Mammary epithelial cell (primary cell): ENCODE measurements at regions of chr14 and their contacts with region 1.

Region 1: DNA sequence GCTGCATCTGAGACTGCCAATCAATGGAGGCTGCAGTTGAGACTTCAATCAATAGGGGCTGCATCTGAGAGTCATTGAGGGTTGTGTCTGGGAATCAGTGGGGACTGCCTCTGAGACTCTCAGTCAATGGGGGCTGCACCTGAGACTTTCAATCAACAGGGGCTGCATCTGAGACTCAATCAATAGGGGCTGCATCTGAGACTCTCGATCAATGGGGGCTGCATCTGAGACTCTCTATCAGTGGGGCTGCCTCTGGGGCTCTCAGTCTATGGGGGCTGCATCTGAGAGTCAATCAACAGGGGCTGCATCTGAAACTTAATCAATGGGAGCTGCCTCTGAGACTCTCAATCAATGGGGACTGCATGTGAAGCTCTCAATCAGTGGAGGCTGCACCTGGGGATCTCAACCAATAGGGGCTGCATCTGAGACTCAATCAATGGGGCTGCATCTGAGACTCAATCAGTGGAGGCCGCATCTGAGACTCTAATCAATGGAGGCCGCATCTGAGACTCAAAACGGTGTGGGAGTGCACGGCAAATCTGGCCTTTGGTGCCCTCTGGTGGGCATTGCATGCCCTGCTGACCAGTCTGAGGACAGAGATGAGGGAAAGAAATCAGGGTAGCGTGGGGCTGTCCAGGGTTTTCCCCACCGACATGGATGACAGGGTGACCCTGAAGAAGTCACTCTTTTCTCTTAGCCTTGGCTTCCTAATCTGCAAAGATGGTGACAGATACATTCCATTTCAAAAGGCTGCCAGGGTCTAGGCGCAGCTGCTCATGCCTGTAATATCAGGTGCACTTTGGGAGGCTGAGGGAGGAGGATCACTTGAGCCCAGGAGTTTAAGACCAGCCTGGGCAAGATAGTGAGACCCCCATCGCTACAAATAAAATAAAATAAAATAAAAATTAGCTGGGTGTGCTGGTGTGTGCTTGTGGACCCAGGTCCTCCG is 41.3 kb upstream of the EIF5 start:
- DNase-seq: peak; percentile 41
- H3K4me3 ChIP-seq: no peak overlapping the region
- H3K27ac ChIP-seq: no peak overlapping the region
- H3K4me1 ChIP-seq: peaks cover 6% of the 10 kb centered on the region
- H3K27me3 ChIP-seq: no peaks in the 10 kb centered on the region
- CTCF ChIP-seq: peak; percentile 91 to 97

Region 2: DNA sequence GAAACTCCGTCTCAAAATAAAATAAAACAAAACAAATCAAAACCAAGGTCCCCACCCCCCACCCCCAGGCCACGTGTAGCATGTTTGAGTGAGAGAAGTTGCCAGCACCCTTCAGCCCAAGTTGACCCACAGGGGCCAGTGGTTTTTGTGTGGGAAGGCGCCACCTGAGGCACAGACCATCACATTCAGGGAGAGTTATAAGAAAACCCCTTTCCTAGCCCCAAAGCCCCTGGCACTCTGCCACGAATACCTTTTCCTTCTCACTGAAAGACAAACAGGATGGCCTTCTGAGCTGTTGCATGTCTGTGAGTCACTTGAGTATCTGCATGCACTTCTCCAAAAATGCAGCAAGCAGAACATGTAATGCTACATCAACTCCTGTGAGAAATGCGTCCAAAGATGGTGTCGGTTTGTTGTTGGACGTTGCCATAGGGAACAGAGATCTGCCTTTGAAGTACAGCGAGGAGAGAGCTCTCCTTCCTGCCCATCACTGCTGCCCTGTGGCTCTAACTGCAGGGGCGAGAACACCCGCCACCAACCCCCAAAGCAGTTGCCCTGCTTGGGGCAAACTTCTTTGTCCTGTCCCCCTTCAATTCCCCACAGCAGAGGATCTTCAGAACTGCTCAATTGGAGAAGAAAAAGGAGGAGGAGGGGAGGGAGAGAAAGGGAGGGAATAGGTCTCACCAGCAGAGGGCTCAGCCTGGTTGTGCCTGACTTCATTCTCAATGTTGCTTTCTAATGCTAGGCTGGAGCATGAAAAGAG is 518.1 kb before region 1 on chr14:
- CTCF ChIA-PET with region 1: no interaction called
- dilution Hi-C with region 1: no loop called
- in situ Hi-C with region 1: no loop called
- intact Hi-C with region 1: loop called (anchors 5 kb)
- DNase-seq: peak; percentile 63
- H3K4me3 ChIP-seq: no peak overlapping the region
- H3K27ac ChIP-seq: no peak overlapping the region
- H3K4me1 ChIP-seq: peaks cover 24% of the 10 kb centered on the region
- H3K27me3 ChIP-seq: no peaks in the 10 kb centered on the region
- CTCF ChIP-seq: peak; percentile 74 to 83

Region 3: DNA sequence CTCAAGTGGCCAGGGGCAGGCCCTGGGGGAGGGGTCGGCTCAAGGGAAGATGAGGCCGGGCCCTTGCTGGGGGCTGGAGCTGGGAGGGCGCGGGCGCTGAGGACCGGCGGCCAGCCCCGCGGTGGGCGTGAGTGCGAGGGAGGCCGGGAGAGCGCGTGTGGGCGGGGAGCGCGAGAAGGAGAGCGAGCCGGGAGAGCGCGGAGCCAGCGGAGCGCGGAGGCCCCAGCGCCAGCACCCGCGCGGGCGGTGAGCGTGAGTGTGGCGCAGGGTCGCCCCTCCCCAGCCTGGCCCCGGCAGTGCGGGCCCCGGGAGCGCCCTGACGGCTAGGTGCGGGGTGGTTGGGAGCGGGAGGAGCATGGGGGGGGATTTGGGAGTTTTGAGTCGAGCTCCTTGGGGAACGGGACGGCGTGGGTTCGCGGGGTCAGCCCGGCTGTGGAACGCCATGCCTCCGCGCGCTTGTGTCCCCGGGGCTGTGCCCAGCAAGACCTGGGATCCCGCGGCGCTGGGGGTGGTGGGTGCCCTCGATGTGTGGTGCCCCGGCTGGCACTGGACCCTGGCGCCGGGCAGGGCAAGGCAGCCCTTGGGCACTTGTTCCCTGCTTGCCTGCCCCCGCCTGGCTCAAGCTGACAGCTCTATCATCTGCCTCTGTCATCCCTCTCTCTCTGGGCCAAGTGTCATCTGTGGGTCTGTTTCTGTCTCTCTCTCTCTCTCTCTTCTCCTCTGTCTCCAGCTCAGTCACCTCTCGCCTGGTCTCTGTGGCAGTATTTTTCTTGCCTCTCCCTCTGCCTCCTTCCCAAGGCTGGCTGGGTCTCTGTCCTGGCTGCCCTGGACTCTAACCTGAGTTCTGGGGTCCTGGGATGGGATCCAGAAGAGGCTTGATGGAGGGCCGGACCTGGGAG is 208.4 kb before region 1 on chr14 and contains the start of gene LBHD2:
- CTCF ChIA-PET with region 1: no interaction called
- dilution Hi-C with region 1: no loop called
- in situ Hi-C with region 1: loop called (anchors 5 to 10 kb)
- intact Hi-C with region 1: no loop called
- DNase-seq: no peak
- H3K4me3 ChIP-seq: no peak within 1 kb of the TSS
- H3K27ac ChIP-seq: no peak within 1 kb of the TSS
- H3K4me1 ChIP-seq: no peaks in the 10 kb centered on the region
- H3K27me3 ChIP-seq: peaks cover 7% of the 10 kb centered on the region
- CTCF ChIP-seq: no peak
- total RNA-seq, gene LBHD2: not detected

Region 4: GRCh38 chr14:103185051-103185992 is 107.4 kb before region 1 on chr14:
- CTCF ChIA-PET with region 1: no interaction called
- dilution Hi-C with region 1: no loop called
- in situ Hi-C with region 1: no loop called
- intact Hi-C with region 1: loop called (anchors 1 kb)
- DNase-seq: peak; percentile 82
- H3K4me3 ChIP-seq: no peak overlapping the region
- H3K27ac ChIP-seq: peak overlapping the region; percentile 36
- H3K4me1 ChIP-seq: peaks cover 11% of the 10 kb centered on the region
- H3K27me3 ChIP-seq: peaks cover 3% of the 10 kb centered on the region
- CTCF ChIP-seq: peak; percentile 54 to 63

Region 5: DNA sequence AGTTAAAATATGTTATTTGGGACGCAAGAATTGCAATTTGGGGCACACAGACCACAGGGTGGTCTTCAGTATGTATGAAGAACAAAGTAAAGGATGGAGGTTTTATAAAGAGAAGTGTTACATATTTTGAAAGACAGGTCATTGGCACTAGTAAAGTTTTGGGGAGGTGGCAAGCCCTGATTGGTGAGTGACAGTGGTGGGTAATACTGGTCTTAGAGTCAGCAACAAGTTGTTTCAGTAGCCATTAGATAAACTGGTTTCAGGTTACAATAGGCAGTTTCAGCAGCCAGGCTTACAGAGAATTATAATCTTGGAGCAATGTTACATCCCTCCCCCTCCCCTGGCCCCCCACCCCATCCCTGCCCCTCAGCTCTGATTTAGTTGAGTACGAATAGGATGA is 110.0 kb after region 1 on chr14:
- CTCF ChIA-PET with region 1: no interaction called
- dilution Hi-C with region 1: no loop called
- in situ Hi-C with region 1: no loop called
- intact Hi-C with region 1: no loop called
- DNase-seq: no peak
- H3K4me3 ChIP-seq: no peak overlapping the region
- H3K27ac ChIP-seq: no peak overlapping the region
- H3K4me1 ChIP-seq: peaks cover 44% of the 10 kb centered on the region
- H3K27me3 ChIP-seq: no peaks in the 10 kb centered on the region
- CTCF ChIP-seq: no peak